Heart left ventricle (tissue), 16 donors: ENCODE measurements at regions of chr5 and their contacts with region 1.

Region 1: GRCh38 chr5:163347671-163348070 is 89.7 kb upstream of the CCNG1 start:
- DNase-seq: peak in 4 of 5 donors; percentile 13 to 33 (median 30)
- ATAC-seq: no peak
- H3K4me3 ChIP-seq: no peak overlapping the region
- H3K27ac ChIP-seq: no peak overlapping the region
- H3K4me1 ChIP-seq: peaks cover 0 to 11% (median 0%) of the 10 kb centered on the region in 12 donors
- H3K27me3 ChIP-seq: no peaks in the 10 kb centered on the region
- CTCF ChIP-seq: peak; percentile 56 to 81 (median 76)
- POLR2A ChIP-seq: no peak

Region 2: GRCh38 chr5:161544350-161544765 is 1803.3 kb before region 1 on chr5:
- intact Hi-C with region 1: loop called in 2 of 10 experiments (anchors 5 kb)
- DNase-seq: peak in 1 of 5 donors; percentile 23
- ATAC-seq: no peak
- H3K4me3 ChIP-seq: no peak overlapping the region
- H3K27ac ChIP-seq: no peak overlapping the region
- H3K4me1 ChIP-seq: peaks cover 0 to 29% (median 6%) of the 10 kb centered on the region in 12 donors
- H3K27me3 ChIP-seq: peaks cover 17 to 71% (median 38%) of the 10 kb centered on the region in 9 donors
- CTCF ChIP-seq: peak; percentile 37 to 72 (median 58)
- POLR2A ChIP-seq: no peak

Region 3: GRCh38 chr5:162209005-162209605 is 1138.6 kb before region 1 on chr5:
- intact Hi-C with region 1: loop called in 2 of 10 experiments (anchors 10 kb)
- DNase-seq: peak in 1 of 5 donors; percentile 7
- ATAC-seq: peak in 1 of 4 donors; percentile 69
- H3K4me3 ChIP-seq: no peak overlapping the region
- H3K27ac ChIP-seq: no peak overlapping the region
- H3K4me1 ChIP-seq: no peaks in the 10 kb centered on the region
- H3K27me3 ChIP-seq: peaks cover 0 to 6% (median 0%) of the 10 kb centered on the region in 9 donors
- CTCF ChIP-seq: peak in 7 of 12 donors; percentile 26 to 53 (median 39)
- POLR2A ChIP-seq: no peak

Region 4: GRCh38 chr5:162217037-162217436 is 1130.6 kb before region 1 on chr5:
- intact Hi-C with region 1: loop called in 1 of 10 experiments (anchors 10 kb)
- DNase-seq: no peak
- ATAC-seq: no peak
- H3K4me3 ChIP-seq: no peak overlapping the region
- H3K27ac ChIP-seq: no peak overlapping the region
- H3K4me1 ChIP-seq: no peaks in the 10 kb centered on the region
- H3K27me3 ChIP-seq: no peaks in the 10 kb centered on the region
- CTCF ChIP-seq: no peak
- POLR2A ChIP-seq: no peak

Region 5: GRCh38 chr5:163727028-163727427 is 379.4 kb after region 1 on chr5:
- intact Hi-C with region 1: no loop called
- DNase-seq: no peak
- ATAC-seq: no peak
- H3K4me3 ChIP-seq: no peak overlapping the region
- H3K27ac ChIP-seq: no peak overlapping the region
- H3K4me1 ChIP-seq: no peaks in the 10 kb centered on the region
- H3K27me3 ChIP-seq: no peaks in the 10 kb centered on the region
- CTCF ChIP-seq: no peak
- POLR2A ChIP-seq: no peak